Activated CD4-positive, alpha-beta memory T cell treated with anti-CD3 and anti-CD28 coated beads, Interleukin-2, amount 10 ng/mL, durations not matched to agents 7 days and 5 days (primary cell): ENCODE measurements at regions of chrX and their contacts with region 1.

Region 1: GRCh38 chrX:100685284-100685996 is 41.4 kb downstream of the SRPX2 start:
- DNase-seq: peak; percentile 60
- H3K4me3 Mint-ChIP-seq: no peak overlapping the region
- H3K27ac Mint-ChIP-seq: no peak overlapping the region
- H3K4me1 Mint-ChIP-seq: no peaks in the 10 kb centered on the region
- H3K27me3 Mint-ChIP-seq: peaks cover 14% of the 10 kb centered on the region

Region 2: GRCh38 chrX:100625985-100626491 is 59.4 kb before region 1 on chrX:
- CTCF ChIA-PET with region 1: no interaction called
- POLR2A ChIA-PET with region 1: no interaction called
- DNase-seq: no peak
- H3K4me3 Mint-ChIP-seq: no peak overlapping the region
- H3K27ac Mint-ChIP-seq: no peak overlapping the region
- H3K4me1 Mint-ChIP-seq: peaks cover 9% of the 10 kb centered on the region
- H3K27me3 Mint-ChIP-seq: peaks cover 14% of the 10 kb centered on the region

Region 3: GRCh38 chrX:100768679-100769338 is 83.4 kb after region 1 on chrX:
- CTCF ChIA-PET with region 1: interaction called, 35 read pairs
- POLR2A ChIA-PET with region 1: no interaction called
- DNase-seq: peak; percentile 83
- H3K4me3 Mint-ChIP-seq: no peak overlapping the region
- H3K27ac Mint-ChIP-seq: no peak overlapping the region
- H3K4me1 Mint-ChIP-seq: no peaks in the 10 kb centered on the region
- H3K27me3 Mint-ChIP-seq: peaks cover 32% of the 10 kb centered on the region